Panc1 (cell line): ENCODE measurements at regions of chr11 and their contacts with region 1.

Region 1: DNA sequence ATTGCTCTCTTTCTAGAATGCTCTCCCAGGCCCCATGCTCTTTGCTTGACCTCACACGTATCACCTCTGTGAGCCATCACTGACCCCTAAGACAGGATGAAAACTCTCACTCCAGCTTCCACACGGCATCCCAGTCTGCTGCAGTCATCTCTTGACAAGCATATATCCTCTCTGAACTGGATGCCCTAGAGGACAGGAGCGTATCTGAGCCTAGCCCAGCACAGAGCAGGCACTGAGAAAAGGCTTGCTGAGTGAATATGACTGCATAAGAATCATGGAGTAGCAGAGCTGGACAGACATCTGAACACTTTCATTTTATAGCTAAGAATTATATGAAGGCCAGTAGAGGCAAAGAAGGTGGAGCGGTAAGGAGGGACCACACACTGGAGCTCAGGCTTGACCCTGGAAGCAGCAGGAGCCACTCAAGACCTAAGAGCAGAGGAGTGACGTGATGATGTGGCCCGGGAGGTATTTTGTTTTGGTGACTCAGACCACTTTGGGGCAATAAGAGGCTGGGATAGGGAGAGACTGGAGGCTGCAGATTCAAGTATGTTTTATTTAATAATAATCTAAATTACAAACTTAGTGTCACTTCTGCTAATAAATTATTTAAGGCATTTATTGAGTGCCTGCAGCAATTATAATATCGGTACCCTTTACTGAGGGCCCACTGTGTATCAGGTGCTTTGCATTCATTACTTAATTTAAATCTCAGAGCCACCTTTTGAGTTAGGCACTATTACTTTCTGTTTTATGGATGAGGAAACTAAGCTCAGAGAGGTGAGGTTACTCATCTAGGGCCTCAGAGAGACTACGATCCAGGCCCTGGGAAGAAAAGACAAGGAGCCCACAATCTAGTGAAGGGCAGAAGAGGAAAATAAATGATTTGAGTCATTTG is 42.6 kb downstream of the MAP6 start:
- DNase-seq: no peak
- ATAC-seq: peak; percentile 56; the same call in 1 of the 2 replicates
- H3K4me3 ChIP-seq: no peak overlapping the region
- H3K27ac ChIP-seq: no peak overlapping the region
- H3K4me1 ChIP-seq: no peaks in the 10 kb centered on the region
- H3K27me3 ChIP-seq: peaks cover 15% of the 10 kb centered on the region
- CTCF ChIP-seq: no peak

Region 2: GRCh38 chr11:74634537-74634936 is 991.7 kb before region 1 on chr11:
- CTCF ChIA-PET with region 1: no interaction called
- POLR2A ChIA-PET with region 1: no interaction called
- in situ Hi-C with region 1: no loop called
- intact Hi-C with region 1: no loop called
- DNase-seq: no peak
- ATAC-seq: peak; percentile 75
- H3K4me3 ChIP-seq: no peak overlapping the region
- H3K27ac ChIP-seq: no peak overlapping the region
- H3K4me1 ChIP-seq: no peaks in the 10 kb centered on the region
- H3K27me3 ChIP-seq: no peaks in the 10 kb centered on the region
- CTCF ChIP-seq: peak; percentile 67

Region 3: DNA sequence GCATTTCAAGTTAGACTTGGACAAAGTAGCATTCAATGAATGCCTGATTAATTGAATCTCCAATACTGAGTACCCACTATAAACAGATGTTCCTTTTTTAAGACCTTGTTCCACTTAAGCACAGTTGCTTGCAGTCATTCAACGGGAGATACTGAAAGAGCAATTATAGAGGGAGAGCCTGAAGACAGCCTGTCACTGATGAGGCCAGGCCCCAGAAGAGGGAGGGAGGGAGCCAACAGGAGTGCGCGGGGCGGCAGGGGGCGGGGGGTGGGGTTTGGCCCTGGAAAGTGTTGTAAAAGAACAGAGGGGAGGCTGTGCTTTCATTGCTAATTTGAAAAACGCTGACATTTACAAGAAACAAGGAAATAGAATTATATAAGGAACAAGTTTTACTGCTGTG is 10.5 kb before region 1 on chr11:
- CTCF ChIA-PET with region 1: no interaction called
- POLR2A ChIA-PET with region 1: interaction called, 11 read pairs
- in situ Hi-C with region 1: no loop called
- intact Hi-C with region 1: no loop called
- DNase-seq: no peak
- ATAC-seq: no peak
- H3K4me3 ChIP-seq: no peak overlapping the region
- H3K27ac ChIP-seq: no peak overlapping the region
- H3K4me1 ChIP-seq: no peaks in the 10 kb centered on the region
- H3K27me3 ChIP-seq: no peaks in the 10 kb centered on the region
- CTCF ChIP-seq: no peak

Region 4: GRCh38 chr11:76207642-76208401 is 581.6 kb after region 1 on chr11:
- CTCF ChIA-PET with region 1: no interaction called
- POLR2A ChIA-PET with region 1: no interaction called
- in situ Hi-C with region 1: no loop called
- intact Hi-C with region 1: no loop called
- DNase-seq: peak; percentile 36
- ATAC-seq: peak; percentile 75
- H3K4me3 ChIP-seq: peak overlapping the region; percentile 49 to 93
- H3K27ac ChIP-seq: no peak overlapping the region
- H3K4me1 ChIP-seq: peaks cover 7% of the 10 kb centered on the region; the same call in 1 of the 2 replicates
- H3K27me3 ChIP-seq: peaks cover 10% of the 10 kb centered on the region; the same call in 1 of the 2 replicates
- CTCF ChIP-seq: peak; percentile 100